Activated CD4-positive, alpha-beta T cell treated with anti-CD3 and anti-CD28 coated beads for 36 hours (primary cell): ENCODE measurements at regions of chr5 and their contacts with region 1.

Region 1: GRCh38 chr5:119031905-119032304 is 39.0 kb upstream of the DMXL1 start:
- DNase-seq: peak; percentile 20
- ATAC-seq: no peak
- H3K4me3 Mint-ChIP-seq: no peak overlapping the region
- H3K27ac Mint-ChIP-seq: peak overlapping the region; percentile 48
- H3K4me1 Mint-ChIP-seq: peaks cover 21% of the 10 kb centered on the region
- H3K27me3 Mint-ChIP-seq: no peaks in the 10 kb centered on the region

Region 2: GRCh38 chr5:118854819-118855218 is 177.1 kb before region 1 on chr5:
- CTCF ChIA-PET with region 1: no interaction called
- POLR2A ChIA-PET with region 1: no interaction called
- intact Hi-C with region 1: no loop called
- DNase-seq: no peak
- ATAC-seq: no peak
- H3K4me3 Mint-ChIP-seq: no peak overlapping the region
- H3K27ac Mint-ChIP-seq: no peak overlapping the region
- H3K4me1 Mint-ChIP-seq: no peaks in the 10 kb centered on the region
- H3K27me3 Mint-ChIP-seq: no peaks in the 10 kb centered on the region

Region 3: DNA sequence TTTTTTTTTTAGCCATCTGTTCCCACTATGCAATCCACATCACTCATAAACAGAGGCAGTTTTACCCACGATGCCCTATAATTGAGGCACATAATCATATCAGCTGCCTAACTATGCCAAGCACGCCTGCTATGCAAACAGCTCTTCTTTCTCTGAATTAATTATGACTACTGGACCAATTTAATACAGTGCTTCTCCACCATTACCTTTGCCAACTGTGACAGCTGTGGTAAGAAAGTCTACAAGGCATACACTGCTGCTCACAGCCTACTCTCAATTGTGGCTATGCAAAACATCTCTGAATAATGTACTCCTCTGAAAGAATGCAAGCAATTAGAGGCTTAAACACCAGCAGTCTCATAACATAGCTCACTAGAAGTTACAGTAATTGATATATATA is 140.7 kb before region 1 on chr5:
- CTCF ChIA-PET with region 1: no interaction called
- POLR2A ChIA-PET with region 1: no interaction called
- intact Hi-C with region 1: no loop called
- DNase-seq: no peak
- ATAC-seq: no peak
- H3K4me3 Mint-ChIP-seq: no peak overlapping the region
- H3K27ac Mint-ChIP-seq: no peak overlapping the region
- H3K4me1 Mint-ChIP-seq: no peaks in the 10 kb centered on the region
- H3K27me3 Mint-ChIP-seq: no peaks in the 10 kb centered on the region

Region 4: DNA sequence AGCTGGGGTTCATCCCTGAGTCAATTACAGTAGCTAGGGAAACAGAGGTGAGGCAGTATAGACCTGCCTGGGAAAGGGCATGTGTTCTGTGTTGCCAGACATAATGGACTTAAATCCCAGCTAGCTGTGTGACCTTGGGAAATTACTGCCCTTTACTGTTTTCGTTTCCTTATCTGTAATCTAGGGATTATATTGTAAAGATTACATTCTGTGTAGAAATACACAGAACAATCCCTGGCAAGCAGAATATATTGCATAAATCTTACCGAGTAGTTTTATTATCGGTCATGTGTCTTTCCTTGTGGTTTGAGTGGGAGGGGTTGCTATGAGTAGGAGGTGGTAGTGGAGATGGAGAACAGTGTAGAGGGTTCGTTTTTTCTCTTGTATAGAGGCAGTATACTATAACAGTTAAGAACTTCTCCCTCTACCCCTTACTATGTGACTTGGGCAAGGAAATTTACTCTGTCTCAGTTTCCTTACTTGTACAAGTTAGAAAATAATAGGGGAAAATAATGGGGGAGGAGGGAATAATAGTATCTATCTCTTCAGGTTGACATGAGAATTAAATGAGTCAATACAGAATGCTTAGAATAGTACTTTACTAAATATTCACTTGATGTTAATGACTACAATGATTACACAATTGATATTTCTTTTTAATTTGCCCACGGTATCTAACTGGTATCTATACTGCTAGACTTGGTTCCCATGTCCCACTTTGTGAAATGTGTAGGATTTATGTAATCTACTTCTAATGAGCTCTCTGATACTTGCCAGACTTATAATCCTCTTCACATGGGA is 31.9 kb after region 1 on chr5:
- CTCF ChIA-PET with region 1: no interaction called
- POLR2A ChIA-PET with region 1: no interaction called
- intact Hi-C with region 1: loop called (anchors 2 kb)
- DNase-seq: peak; percentile 43
- ATAC-seq: peak; percentile 93
- H3K4me3 Mint-ChIP-seq: peak overlapping the region; percentile 1
- H3K27ac Mint-ChIP-seq: no peak overlapping the region
- H3K4me1 Mint-ChIP-seq: peaks cover 14% of the 10 kb centered on the region
- H3K27me3 Mint-ChIP-seq: no peaks in the 10 kb centered on the region

Region 5: DNA sequence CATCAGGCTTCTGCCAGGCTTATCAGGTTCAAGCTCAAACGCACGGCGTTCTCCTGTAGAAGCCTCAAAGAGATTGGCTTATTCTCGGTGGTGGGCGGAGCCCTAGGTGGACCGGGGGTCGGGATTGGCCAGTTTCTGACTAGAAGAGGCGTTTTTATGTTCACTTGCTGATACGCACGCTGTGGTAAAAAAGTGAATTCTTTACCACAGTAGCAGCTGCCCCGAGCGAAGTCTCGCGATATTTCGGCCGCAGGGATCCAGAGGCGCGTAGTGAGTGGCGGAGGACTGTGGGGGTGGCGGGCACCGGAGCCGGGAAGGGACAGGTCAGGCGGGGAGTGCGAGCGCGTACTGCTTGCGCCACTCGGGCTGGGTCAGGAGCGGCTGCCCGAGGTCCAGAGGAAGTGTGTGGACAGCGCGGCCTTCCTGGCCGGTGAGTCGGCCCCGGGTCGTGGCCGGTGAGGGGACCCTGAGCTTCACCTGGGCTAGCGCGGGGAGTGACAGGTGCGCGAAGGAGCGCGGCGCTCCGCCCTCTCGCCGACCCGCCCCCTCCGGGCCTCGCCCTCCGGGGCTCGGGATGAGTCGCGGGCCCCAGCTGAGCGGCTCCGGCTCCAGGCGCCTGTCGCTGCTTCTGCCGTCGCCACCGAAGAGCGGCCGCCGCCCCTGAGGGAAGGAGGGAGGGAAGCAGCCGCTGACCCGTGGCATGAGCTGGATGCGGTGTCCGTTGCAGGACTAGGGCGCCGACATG is 39.1 kb after region 1 on chr5 and contains the start of gene DMXL1:
- CTCF ChIA-PET with region 1: no interaction called
- POLR2A ChIA-PET with region 1: no interaction called
- intact Hi-C with region 1: loop called (anchors 2 kb)
- DNase-seq: peak; percentile 99
- ATAC-seq: peak; percentile 87
- H3K4me3 Mint-ChIP-seq: peak within 1 kb of the TSS; percentile 92
- H3K27ac Mint-ChIP-seq: peak within 1 kb of the TSS; percentile 96
- H3K4me1 Mint-ChIP-seq: peaks cover 35% of the 10 kb centered on the region
- H3K27me3 Mint-ChIP-seq: no peaks in the 10 kb centered on the region
- total RNA-seq, gene DMXL1: 23.5 to 31.1 TPM

Region 6: DNA sequence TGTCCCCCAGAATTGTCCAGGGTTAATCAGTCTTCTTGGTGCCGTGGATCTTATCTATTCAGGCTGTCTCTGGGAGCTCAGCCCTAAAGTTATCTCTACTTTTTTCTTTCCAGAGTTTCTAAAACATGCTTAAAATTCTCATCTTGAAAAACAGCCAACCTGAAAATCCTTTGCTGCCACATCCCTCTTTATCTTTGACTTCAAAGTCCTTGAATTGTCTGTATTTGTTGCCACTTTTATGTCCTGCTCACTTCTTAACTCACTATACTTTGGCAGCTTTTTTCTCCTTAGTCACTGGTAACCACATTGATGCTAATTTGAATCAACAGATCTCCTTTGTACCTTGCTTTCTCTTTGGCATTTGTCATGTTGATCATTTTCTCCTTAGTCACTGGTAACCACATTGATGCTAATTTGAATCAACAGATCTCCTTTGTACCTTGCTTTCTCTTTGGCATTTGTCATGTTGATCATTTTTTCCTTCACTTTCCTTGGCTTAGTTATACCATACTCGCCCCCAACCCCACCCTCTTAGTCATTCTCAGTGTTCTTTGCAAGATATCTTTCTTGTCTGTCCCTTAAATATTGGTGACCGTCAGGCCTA is 47.5 kb after region 1 on chr5:
- CTCF ChIA-PET with region 1: no interaction called
- POLR2A ChIA-PET with region 1: no interaction called
- intact Hi-C with region 1: loop called (anchors 1 to 2 kb)
- DNase-seq: peak; percentile 70
- ATAC-seq: peak; percentile 92
- H3K4me3 Mint-ChIP-seq: peak overlapping the region; percentile 33
- H3K27ac Mint-ChIP-seq: peak overlapping the region; percentile 59
- H3K4me1 Mint-ChIP-seq: peaks cover 50% of the 10 kb centered on the region
- H3K27me3 Mint-ChIP-seq: no peaks in the 10 kb centered on the region